K562 (cell line): ENCODE measurements at regions of chr17 and their contacts with region 1.

Region 1: GRCh38 chr17:8649157-8650118 is 18.9 kb upstream of the MYH10 start:
- DNase-seq: no peak
- ATAC-seq: no peak
- H3K4me3 ChIP-seq: no peak overlapping the region
- H3K27ac ChIP-seq: no peak overlapping the region
- H3K4me1 ChIP-seq: no peaks in the 10 kb centered on the region
- H3K27me3 ChIP-seq: peaks cover 12 to 50% of the 10 kb centered on the region in 2 experiments; a peak in 4 of 5 replicates
- CTCF ChIP-seq: no peak
- EP300 ChIP-seq: no peak
- POLR2A ChIP-seq: no peak
- RAD21 ChIP-seq: no peak

Region 2: DNA sequence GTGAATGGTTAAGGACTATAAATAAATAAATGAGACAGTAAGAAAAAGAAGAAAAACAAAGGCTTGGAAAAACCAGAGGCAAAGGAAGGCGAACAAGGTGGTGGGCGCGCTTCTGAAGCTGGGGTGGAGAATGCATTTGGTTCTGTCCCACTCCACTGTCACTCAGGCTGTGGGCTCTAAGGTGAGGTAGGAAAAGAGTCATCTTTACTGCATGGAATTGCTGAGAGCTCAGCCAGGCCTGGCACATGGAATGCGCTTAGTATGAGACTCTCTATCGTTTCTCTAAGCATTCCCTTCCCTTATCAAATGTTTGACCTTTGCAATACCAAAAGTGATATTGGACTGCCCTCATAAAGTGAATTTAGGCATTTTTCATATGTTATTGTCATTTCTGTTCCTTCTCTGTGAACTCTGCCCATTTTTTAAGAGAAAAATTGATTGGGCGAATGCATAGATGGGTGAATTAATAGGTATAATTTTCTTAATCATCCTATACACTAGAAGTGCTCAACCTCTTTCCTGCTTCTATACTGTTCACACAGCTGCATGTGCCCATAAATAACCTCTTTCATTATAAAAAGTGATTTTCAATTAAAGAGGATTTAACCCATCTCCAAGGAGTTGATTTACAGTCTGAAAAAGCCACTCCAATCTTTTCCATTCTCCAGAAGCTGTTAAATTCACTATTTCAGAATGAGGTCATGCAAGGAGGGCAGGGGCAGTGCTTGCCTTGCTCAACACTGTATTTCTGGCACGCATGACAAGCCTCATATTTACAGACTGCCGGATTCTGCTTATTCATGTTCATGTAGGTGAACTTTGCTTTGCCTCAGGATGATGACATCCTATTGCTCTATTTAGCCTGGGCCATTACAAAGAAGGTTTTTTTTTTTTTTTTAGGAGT is 106.6 kb before region 1 on chr17:
- CTCF ChIA-PET with region 1: no interaction called
- POLR2A ChIA-PET with region 1: no interaction called
- in situ Hi-C with region 1: no loop called
- intact Hi-C with region 1: no loop called
- DNase-seq: no peak
- ATAC-seq: peak; percentile 68
- H3K4me3 ChIP-seq: no peak overlapping the region
- H3K27ac ChIP-seq: no peak overlapping the region
- H3K4me1 ChIP-seq: no peaks in the 10 kb centered on the region
- H3K27me3 ChIP-seq: no peaks in the 10 kb centered on the region
- CTCF ChIP-seq: no peak
- EP300 ChIP-seq: no peak
- POLR2A ChIP-seq: no peak
- RAD21 ChIP-seq: no peak

Region 3: DNA sequence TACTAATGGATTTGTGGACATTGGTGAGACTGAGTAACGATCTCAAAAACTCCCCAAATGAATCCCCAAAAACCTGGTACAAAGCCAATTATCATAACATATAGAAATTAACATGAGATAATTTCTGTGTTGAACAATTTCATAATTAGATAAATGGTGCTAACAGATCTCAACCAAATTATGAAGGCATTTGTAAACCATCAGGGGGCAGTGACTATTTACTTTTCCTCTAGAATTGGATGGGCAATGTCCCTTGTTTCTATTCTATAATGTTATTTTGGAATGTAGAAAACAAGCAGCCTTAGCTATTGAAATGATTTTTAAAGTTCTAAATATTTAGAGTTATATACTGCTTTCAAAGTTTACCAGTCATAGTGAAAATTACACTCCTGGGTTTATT is 76.7 kb before region 1 on chr17:
- CTCF ChIA-PET with region 1: no interaction called
- POLR2A ChIA-PET with region 1: no interaction called
- in situ Hi-C with region 1: no loop called
- intact Hi-C with region 1: loop called (anchors 2 kb)
- DNase-seq: no peak
- ATAC-seq: no peak
- H3K4me3 ChIP-seq: no peak overlapping the region
- H3K27ac ChIP-seq: no peak overlapping the region
- H3K4me1 ChIP-seq: no peaks in the 10 kb centered on the region
- H3K27me3 ChIP-seq: no peaks in the 10 kb centered on the region
- CTCF ChIP-seq: peak in 1 of 3 experiments; percentile 42; a peak in 1 of 6 replicates
- EP300 ChIP-seq: no peak
- POLR2A ChIP-seq: no peak
- RAD21 ChIP-seq: peak; percentile 48 to 66; a peak in 3 of 4 replicates

Region 4: DNA sequence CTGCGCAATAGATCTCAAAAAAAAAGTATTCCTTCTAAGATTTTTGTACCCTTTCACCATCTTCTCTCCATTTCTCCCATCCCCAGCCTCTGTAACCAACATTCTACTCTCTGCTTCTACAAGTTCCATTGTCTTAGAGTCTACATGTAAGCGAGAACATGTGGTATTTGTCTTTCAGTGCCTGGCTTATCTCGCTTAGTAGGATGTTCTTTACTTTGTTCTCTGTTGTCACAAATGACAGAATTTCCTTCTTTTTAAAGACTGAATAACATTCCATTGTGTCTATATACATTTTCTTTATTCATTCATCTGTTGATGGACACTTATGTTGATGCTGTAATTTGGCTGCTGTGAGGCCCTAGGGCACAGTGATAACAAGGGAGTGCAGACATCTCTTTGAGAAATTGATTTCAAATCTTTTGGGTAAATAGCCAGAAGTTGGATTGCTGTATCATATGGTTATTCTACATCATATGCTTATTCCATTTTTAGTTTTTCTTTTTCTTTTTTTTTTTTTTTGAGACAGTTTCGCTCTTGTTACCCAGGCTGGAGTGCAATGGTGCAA is 18.8 kb after region 1 on chr17:
- CTCF ChIA-PET with region 1: no interaction called
- POLR2A ChIA-PET with region 1: interaction called, 13 read pairs
- in situ Hi-C with region 1: no loop called
- intact Hi-C with region 1: no loop called
- DNase-seq: no peak
- ATAC-seq: no peak
- H3K4me3 ChIP-seq: no peak overlapping the region
- H3K27ac ChIP-seq: no peak overlapping the region
- H3K4me1 ChIP-seq: no peaks in the 10 kb centered on the region
- H3K27me3 ChIP-seq: peaks cover 7 to 10% of the 10 kb centered on the region in 2 experiments; a peak in 3 of 5 replicates
- CTCF ChIP-seq: no peak
- EP300 ChIP-seq: no peak
- POLR2A ChIP-seq: no peak
- RAD21 ChIP-seq: no peak